IMR-90 (cell line): ENCODE measurements at regions of chr5 and their contacts with region 1.

Region 1: GRCh38 chr5:155943516-155944407 is 383.2 kb upstream of the SGCD start:
- DNase-seq: peak; percentile 70
- ATAC-seq: peak; percentile 96
- H3K4me3 ChIP-seq: no peak overlapping the region
- H3K27ac ChIP-seq: no peak overlapping the region
- H3K4me1 ChIP-seq: peaks cover 5% of the 10 kb centered on the region; the same call in 1 of the 2 replicates
- H3K27me3 ChIP-seq: no peaks in the 10 kb centered on the region
- CTCF ChIP-seq: peak; percentile 87
- POLR2A ChIP-seq: no peak
- RAD21 ChIP-seq: peak; percentile 93

Region 2: DNA sequence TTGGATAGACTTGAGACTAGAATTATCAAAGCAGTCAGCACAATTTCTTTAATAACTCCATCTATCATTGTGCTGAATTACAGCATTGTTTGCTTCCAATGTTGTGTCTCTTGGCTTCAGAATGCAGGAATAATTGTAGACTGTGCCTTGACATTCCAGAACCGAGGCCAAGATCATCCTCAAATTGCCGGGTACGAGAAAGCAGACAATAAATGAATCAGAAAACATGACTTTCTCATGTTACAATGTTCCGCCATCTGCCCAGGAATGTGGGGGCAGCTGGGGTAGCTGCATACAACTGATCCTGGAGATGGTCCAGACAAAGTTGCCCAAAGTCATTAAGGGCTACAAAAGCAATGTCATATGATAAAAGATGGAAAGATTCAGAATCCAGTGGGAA is 177.0 kb after region 1 on chr5:
- CTCF ChIA-PET with region 1: no interaction called
- POLR2A ChIA-PET with region 1: no interaction called
- dilution Hi-C with region 1: no loop called
- in situ Hi-C with region 1: no loop called
- intact Hi-C with region 1: loop called (anchors 5 kb)
- DNase-seq: no peak
- ATAC-seq: peak; percentile 50
- H3K4me3 ChIP-seq: no peak overlapping the region
- H3K27ac ChIP-seq: peak overlapping the region; percentile 72
- H3K4me1 ChIP-seq: peaks cover 6% of the 10 kb centered on the region
- H3K27me3 ChIP-seq: no peaks in the 10 kb centered on the region
- CTCF ChIP-seq: no peak
- POLR2A ChIP-seq: no peak
- RAD21 ChIP-seq: no peak

Region 3: DNA sequence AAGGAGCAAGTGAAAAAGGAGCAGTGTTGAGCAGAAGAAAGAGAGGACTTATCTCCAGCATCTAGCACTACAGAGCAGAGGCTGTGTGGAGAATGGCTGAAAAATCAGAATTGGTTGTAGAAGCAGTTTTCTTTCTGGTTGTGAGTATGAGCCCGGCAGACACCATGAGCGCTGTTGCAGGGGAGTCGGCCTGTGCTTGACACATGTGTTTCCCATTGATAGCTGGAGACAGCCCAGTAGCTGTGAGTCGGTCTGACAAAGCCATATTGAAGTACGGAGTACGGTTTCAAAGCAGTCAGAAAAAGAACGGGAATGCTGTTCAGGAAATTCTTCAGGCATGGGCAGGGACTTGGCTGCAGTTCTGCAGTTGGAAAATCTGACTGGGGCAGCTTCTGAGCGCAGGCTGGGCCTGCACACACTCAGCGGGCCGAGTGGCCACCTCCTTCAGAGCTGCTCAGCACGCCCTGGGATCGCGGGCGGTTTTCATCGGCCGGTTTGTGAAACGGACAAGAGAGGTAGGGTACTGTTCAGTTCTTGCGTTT is 383.0 kb after region 1 on chr5 and contains the start of gene SGCD:
- CTCF ChIA-PET with region 1: interaction called, 4 read pairs
- POLR2A ChIA-PET with region 1: no interaction called
- dilution Hi-C with region 1: no loop called
- in situ Hi-C with region 1: no loop called
- intact Hi-C with region 1: loop called (anchors 2 kb)
- DNase-seq: peak; percentile 90
- ATAC-seq: peak; percentile 94
- H3K4me3 ChIP-seq: peak within 1 kb of the TSS; percentile 72
- H3K27ac ChIP-seq: peak within 1 kb of the TSS; percentile 89
- H3K4me1 ChIP-seq: peaks cover 10% of the 10 kb centered on the region
- H3K27me3 ChIP-seq: no peaks in the 10 kb centered on the region
- CTCF ChIP-seq: no peak
- POLR2A ChIP-seq: peak; percentile 56
- RAD21 ChIP-seq: peak; percentile 33; the same call in 1 of the 2 replicates
- total RNA-seq, gene SGCD: 10.6 TPM in 2 replicates

Region 4: GRCh38 chr5:156444753-156445291 is 501.1 kb after region 1 on chr5:
- CTCF ChIA-PET with region 1: no interaction called
- POLR2A ChIA-PET with region 1: no interaction called
- dilution Hi-C with region 1: no loop called
- in situ Hi-C with region 1: no loop called
- intact Hi-C with region 1: loop called (anchors 1 kb)
- DNase-seq: no peak
- ATAC-seq: peak; percentile 77
- H3K4me3 ChIP-seq: no peak overlapping the region
- H3K27ac ChIP-seq: no peak overlapping the region
- H3K4me1 ChIP-seq: peaks cover 2% of the 10 kb centered on the region; the same call in 1 of the 2 replicates
- H3K27me3 ChIP-seq: no peaks in the 10 kb centered on the region
- CTCF ChIP-seq: no peak
- POLR2A ChIP-seq: no peak
- RAD21 ChIP-seq: no peak

Region 5: GRCh38 chr5:156640691-156641241 is 697.0 kb after region 1 on chr5:
- CTCF ChIA-PET with region 1: no interaction called
- POLR2A ChIA-PET with region 1: no interaction called
- dilution Hi-C with region 1: no loop called
- in situ Hi-C with region 1: no loop called
- intact Hi-C with region 1: loop called (anchors 5 kb)
- DNase-seq: peak; percentile 44
- ATAC-seq: peak; percentile 48
- H3K4me3 ChIP-seq: no peak overlapping the region
- H3K27ac ChIP-seq: no peak overlapping the region; the same call in 1 of the 2 replicates
- H3K4me1 ChIP-seq: peaks cover 5% of the 10 kb centered on the region
- H3K27me3 ChIP-seq: no peaks in the 10 kb centered on the region
- CTCF ChIP-seq: no peak
- POLR2A ChIP-seq: no peak
- RAD21 ChIP-seq: no peak

Region 6: GRCh38 chr5:156824800-156825199 is 881.0 kb after region 1 on chr5:
- CTCF ChIA-PET with region 1: interaction called, 4 read pairs
- POLR2A ChIA-PET with region 1: no interaction called
- dilution Hi-C with region 1: no loop called
- in situ Hi-C with region 1: loop called (anchors 5 kb)
- intact Hi-C with region 1: loop called (anchors 2 kb)
- DNase-seq: peak; percentile 58
- ATAC-seq: peak; percentile 86
- H3K4me3 ChIP-seq: no peak overlapping the region
- H3K27ac ChIP-seq: no peak overlapping the region
- H3K4me1 ChIP-seq: no peaks in the 10 kb centered on the region; the same call in 1 of the 2 replicates
- H3K27me3 ChIP-seq: no peaks in the 10 kb centered on the region; the same call in 1 of the 2 replicates
- CTCF ChIP-seq: peak; percentile 74
- POLR2A ChIP-seq: no peak
- RAD21 ChIP-seq: peak; percentile 78

Region 7: GRCh38 chr5:157142317-157143126 is 1198.8 kb after region 1 on chr5 and contains the start of gene MED7:
- CTCF ChIA-PET with region 1: no interaction called
- POLR2A ChIA-PET with region 1: no interaction called
- dilution Hi-C with region 1: no loop called
- in situ Hi-C with region 1: loop called (anchors 25 kb)
- intact Hi-C with region 1: no loop called
- DNase-seq: peak; percentile 100
- ATAC-seq: peak; percentile 99
- H3K4me3 ChIP-seq: peak within 1 kb of the TSS; percentile 84
- H3K27ac ChIP-seq: peak within 1 kb of the TSS; percentile 87
- H3K4me1 ChIP-seq: no peaks in the 10 kb centered on the region
- H3K27me3 ChIP-seq: no peaks in the 10 kb centered on the region
- CTCF ChIP-seq: no peak
- POLR2A ChIP-seq: peak; percentile 79
- RAD21 ChIP-seq: no peak
- total RNA-seq, gene MED7: 8.6 and 13.9 TPM in 2 replicates